ENCODE measurements at regions of chr5 and their contacts with region 1.

Region 1: GRCh38 chr5:137997726-137998213 is 35.1 kb downstream of the FAM13B start:
- DNase-seq: peak; percentile 50
- H3K4me3 Mint-ChIP-seq: no peak overlapping the region
- H3K27ac Mint-ChIP-seq: peak overlapping the region; percentile 50
- H3K4me1 Mint-ChIP-seq: peaks cover 36% of the 10 kb centered on the region
- H3K27me3 Mint-ChIP-seq: no peaks in the 10 kb centered on the region

Region 2: DNA sequence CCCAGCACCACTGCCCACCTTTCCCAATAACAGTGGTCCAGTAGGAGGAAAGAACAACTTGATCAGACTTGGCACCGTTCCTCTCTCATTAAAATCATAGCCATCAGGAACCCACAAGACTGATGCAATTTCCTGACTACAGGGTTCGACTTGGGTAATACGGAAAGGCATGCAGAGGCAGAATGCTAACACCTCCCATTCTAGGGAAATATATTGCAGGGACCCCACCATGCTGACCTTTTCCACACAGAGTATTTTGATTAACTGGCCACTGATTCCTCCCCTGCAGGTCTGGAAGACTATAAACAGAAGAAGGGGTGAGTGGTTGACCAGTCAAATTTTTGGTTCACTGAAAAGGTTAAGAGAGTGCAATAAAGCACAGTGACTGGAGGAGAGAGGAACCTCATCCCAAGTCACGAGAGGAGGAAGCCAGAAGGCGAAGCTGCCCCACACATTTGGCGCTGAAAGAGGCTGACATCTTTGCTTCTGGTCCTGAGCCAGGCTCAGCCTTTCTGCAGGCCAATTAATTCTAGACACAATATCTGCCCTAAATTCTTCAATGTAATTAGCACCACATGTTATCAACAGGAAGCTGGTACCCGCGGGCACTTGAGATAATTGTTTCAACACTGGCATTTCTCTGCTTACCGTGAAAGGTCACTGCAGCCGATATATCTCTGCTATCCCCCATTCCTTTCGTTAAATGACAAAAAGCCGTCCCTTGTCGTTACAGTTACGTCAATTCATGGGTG is 433.9 kb before region 1 on chr5:
- CTCF ChIA-PET with region 1: no interaction called
- intact Hi-C with region 1: no loop called
- DNase-seq: no peak
- H3K4me3 Mint-ChIP-seq: no peak overlapping the region
- H3K27ac Mint-ChIP-seq: no peak overlapping the region
- H3K4me1 Mint-ChIP-seq: no peaks in the 10 kb centered on the region
- H3K27me3 Mint-ChIP-seq: peaks cover 11% of the 10 kb centered on the region

Region 3: DNA sequence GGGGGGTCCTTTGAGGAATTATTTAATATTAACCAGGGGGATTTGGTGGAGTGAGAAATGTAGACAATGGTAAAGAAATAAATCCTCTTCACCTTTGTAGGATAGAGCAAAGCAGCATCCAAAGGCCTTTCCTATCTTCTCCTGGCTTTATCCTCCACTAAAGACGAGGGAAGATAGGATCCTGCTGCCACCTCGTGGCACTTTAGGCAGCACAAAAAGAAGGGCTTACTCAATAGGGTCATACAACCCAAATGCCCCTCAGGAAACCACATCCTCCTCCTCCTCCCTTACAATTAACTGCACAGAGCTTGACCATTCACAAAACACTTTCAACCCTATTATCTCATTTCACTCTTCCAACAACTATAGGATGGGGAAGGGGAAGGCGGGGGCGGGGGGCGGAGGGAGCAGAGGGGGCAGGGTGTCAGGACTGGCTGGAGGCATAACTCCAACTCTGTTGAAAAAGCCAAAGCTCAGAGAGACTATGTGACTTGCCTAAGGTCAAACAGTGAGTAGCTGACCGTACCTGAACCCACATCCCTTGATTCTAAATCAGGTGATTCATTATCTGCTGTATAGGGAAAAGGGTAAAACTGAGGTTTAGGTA is 175.5 kb before region 1 on chr5:
- CTCF ChIA-PET with region 1: no interaction called
- intact Hi-C with region 1: no loop called
- DNase-seq: peak; percentile 28
- H3K4me3 Mint-ChIP-seq: no peak overlapping the region
- H3K27ac Mint-ChIP-seq: no peak overlapping the region
- H3K4me1 Mint-ChIP-seq: no peaks in the 10 kb centered on the region
- H3K27me3 Mint-ChIP-seq: no peaks in the 10 kb centered on the region

Region 4: DNA sequence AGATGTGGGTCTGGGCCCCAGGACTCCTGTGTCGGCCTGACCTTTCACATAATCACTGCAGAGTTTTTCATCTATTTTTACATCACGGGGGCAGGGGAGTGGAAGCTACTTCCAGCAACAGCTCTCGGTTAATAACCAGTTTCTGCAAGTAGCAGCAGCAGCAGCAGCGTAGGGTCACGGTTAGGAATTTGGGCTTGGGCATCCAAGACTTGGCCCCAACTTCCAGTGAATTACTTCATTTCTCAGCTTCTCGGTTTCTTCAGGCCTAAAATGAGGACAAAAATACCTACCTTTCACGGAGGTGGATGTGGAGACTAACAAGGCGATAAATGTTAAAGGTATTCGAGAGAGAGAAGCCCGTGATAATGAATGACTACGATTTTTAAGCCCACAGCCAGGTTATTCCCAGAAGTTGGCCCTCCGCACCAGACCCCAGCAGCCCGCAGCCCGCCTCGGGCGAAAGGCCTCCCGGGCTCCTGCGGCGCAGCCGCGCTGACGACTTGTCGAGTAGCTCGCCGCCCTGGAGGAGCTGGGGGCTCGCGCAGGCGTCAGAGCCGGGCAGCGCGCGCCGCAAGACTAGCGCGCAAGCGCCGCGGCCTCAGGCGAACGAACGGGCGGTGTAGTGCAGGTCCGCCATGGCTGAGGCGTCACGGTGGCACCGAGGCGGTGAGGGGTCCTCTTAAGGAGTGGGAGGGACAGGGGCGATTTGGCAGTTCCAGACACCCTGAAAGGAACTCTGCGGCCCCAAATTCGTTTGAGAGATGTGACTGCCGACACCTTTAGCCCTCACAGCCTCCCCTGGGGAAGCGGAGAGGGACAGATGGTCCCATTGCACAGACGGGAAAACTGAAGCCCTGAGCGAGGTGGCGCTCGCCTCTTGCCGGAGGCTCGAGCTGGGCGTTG is 108.7 kb before region 1 on chr5 and contains the start of gene PKD2L2:
- CTCF ChIA-PET with region 1: no interaction called
- intact Hi-C with region 1: loop called (anchors 2 kb)
- DNase-seq: peak; percentile 84
- H3K4me3 Mint-ChIP-seq: peak within 1 kb of the TSS; percentile 88
- H3K27ac Mint-ChIP-seq: peak within 1 kb of the TSS; percentile 87
- H3K4me1 Mint-ChIP-seq: peaks cover 21% of the 10 kb centered on the region
- H3K27me3 Mint-ChIP-seq: peaks cover 4% of the 10 kb centered on the region
- total RNA-seq, gene PKD2L2: not detected

Region 5: GRCh38 chr5:137901011-137901817 is 96.6 kb before region 1 on chr5:
- CTCF ChIA-PET with region 1: no interaction called
- intact Hi-C with region 1: no loop called
- DNase-seq: no peak
- H3K4me3 Mint-ChIP-seq: no peak overlapping the region
- H3K27ac Mint-ChIP-seq: no peak overlapping the region
- H3K4me1 Mint-ChIP-seq: no peaks in the 10 kb centered on the region
- H3K27me3 Mint-ChIP-seq: peaks cover 4% of the 10 kb centered on the region

Region 6: DNA sequence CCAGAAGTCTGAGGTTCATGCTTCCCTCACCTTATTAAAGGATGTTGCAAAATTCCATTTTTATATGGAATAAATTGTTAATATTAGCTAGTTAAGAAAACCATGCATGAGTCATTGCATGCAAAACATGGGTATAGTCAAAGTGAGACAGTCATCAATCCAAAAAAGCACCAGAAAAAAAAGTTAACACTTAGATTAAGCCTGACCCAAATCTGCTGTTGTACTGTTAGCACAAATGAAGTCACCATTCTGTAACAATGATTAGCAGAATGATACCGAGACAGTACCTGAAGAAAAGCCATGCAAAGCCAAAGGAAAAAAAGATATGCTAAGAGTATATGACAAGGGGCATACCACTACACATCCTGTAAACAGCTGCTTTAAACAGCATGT is 59.0 kb before region 1 on chr5:
- CTCF ChIA-PET with region 1: no interaction called
- intact Hi-C with region 1: loop called (anchors 1 kb)
- DNase-seq: no peak
- H3K4me3 Mint-ChIP-seq: no peak overlapping the region
- H3K27ac Mint-ChIP-seq: peak overlapping the region; percentile 77
- H3K4me1 Mint-ChIP-seq: peaks cover 39% of the 10 kb centered on the region
- H3K27me3 Mint-ChIP-seq: no peaks in the 10 kb centered on the region

Region 7: GRCh38 chr5:138051441-138052296 is 53.9 kb after region 1 on chr5:
- CTCF ChIA-PET with region 1: no interaction called
- intact Hi-C with region 1: no loop called
- DNase-seq: no peak
- H3K4me3 Mint-ChIP-seq: no peak overlapping the region
- H3K27ac Mint-ChIP-seq: no peak overlapping the region
- H3K4me1 Mint-ChIP-seq: peaks cover 8% of the 10 kb centered on the region
- H3K27me3 Mint-ChIP-seq: no peaks in the 10 kb centered on the region